GM12878 (cell line): ENCODE measurements at regions of chr16 and their contacts with region 1.

Region 1: DNA sequence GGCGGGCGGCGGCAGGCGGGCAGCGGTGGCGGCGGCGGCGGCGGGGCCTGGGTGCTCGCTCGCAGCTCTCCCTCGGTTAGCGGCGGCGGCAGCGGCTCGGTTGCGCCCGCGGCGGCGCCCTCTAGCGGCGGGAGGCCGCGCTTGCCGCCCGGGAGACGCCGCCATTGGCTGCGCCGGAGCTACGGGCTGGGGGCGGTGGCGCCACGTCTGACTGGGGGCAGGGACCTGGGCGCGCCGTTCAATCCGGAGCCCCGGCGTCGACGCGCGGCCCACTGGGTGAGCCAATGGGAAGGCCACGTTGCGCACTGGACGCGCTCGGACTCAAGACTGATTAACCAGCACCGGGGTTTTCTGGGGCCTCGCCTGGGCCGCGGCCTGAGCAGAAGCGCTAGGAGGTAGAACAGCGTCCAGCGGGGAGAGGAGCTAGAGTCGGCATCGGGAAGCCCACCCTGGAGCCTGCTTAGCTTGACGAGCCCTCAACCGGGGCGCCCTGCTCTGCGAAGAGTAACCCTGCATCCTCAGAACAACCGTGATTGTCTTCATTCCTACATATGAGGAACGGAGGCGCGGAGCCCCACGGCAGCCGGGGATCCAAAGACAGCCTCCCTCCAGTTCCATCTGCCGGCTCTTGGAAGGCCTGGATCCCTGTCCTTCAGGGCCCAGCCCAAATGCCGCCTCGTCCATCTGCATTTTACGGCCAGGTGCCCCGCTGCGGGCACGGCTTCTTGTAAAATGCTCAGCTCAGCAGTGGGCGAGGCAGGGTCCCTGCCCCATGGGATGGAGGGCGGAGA is at the start of gene ZC3H7A:
- DNase-seq: peak; percentile 82
- ATAC-seq: peak; percentile 93
- H3K4me3 ChIP-seq: peak within 1 kb of the TSS; percentile 99
- H3K27ac ChIP-seq: peak within 1 kb of the TSS; percentile 95
- H3K4me1 ChIP-seq: peaks cover 25% of the 10 kb centered on the region
- H3K27me3 ChIP-seq: no peaks in the 10 kb centered on the region
- CTCF ChIP-seq: peak; percentile 44 to 78 (median 50); a peak in 5 of 6 replicates
- EP300 ChIP-seq: no peak
- POLR2A ChIP-seq: peak; percentile 97
- RAD21 ChIP-seq: no peak
- polyA plus RNA-seq, gene ZC3H7A: 46.3 to 77.8 TPM

Region 2: GRCh38 chr16:11506741-11507305 is 290.5 kb before region 1 on chr16:
- CTCF ChIA-PET with region 1: no interaction called
- POLR2A ChIA-PET with region 1: no interaction called
- RAD21 ChIA-PET with region 1: no interaction called
- SMC1A ChIA-PET with region 1: no interaction called
- in situ Hi-C with region 1: no loop called
- intact Hi-C with region 1: no loop called
- DNase-seq: no peak
- ATAC-seq: peak; percentile 74
- H3K4me3 ChIP-seq: no peak overlapping the region
- H3K27ac ChIP-seq: no peak overlapping the region
- H3K4me1 ChIP-seq: peaks cover 6% of the 10 kb centered on the region; the same call in 1 of the 2 replicates
- H3K27me3 ChIP-seq: no peaks in the 10 kb centered on the region; a peak in 1 of 4 replicates
- CTCF ChIP-seq: peak; percentile 18 to 22 (median 20); a peak in 4 of 6 replicates
- EP300 ChIP-seq: no peak
- POLR2A ChIP-seq: no peak
- RAD21 ChIP-seq: no peak

Region 3: GRCh38 chr16:11586856-11587642 is 210.3 kb before region 1 on chr16 and contains the start of gene LITAF:
- CTCF ChIA-PET with region 1: interaction called, 4 read pairs
- POLR2A ChIA-PET with region 1: interaction called, 10 read pairs
- RAD21 ChIA-PET with region 1: interaction called, 15 read pairs
- SMC1A ChIA-PET with region 1: interaction called, 4 read pairs
- in situ Hi-C with region 1: no loop called
- intact Hi-C with region 1: no loop called
- DNase-seq: no peak
- ATAC-seq: peak; percentile 78
- H3K4me3 ChIP-seq: peak within 1 kb of the TSS; percentile 97
- H3K27ac ChIP-seq: peak within 1 kb of the TSS; percentile 92
- H3K4me1 ChIP-seq: peaks cover 10% of the 10 kb centered on the region; the same call in 1 of the 2 replicates
- H3K27me3 ChIP-seq: no peaks in the 10 kb centered on the region
- CTCF ChIP-seq: peak in 1 of 3 experiments; percentile 19; a peak in 1 of 6 replicates
- EP300 ChIP-seq: no peak
- POLR2A ChIP-seq: peak; percentile 81
- RAD21 ChIP-seq: peak; percentile 33; the same call in 1 of the 2 replicates
- polyA plus RNA-seq, gene LITAF: 144 to 195 TPM

Region 4: DNA sequence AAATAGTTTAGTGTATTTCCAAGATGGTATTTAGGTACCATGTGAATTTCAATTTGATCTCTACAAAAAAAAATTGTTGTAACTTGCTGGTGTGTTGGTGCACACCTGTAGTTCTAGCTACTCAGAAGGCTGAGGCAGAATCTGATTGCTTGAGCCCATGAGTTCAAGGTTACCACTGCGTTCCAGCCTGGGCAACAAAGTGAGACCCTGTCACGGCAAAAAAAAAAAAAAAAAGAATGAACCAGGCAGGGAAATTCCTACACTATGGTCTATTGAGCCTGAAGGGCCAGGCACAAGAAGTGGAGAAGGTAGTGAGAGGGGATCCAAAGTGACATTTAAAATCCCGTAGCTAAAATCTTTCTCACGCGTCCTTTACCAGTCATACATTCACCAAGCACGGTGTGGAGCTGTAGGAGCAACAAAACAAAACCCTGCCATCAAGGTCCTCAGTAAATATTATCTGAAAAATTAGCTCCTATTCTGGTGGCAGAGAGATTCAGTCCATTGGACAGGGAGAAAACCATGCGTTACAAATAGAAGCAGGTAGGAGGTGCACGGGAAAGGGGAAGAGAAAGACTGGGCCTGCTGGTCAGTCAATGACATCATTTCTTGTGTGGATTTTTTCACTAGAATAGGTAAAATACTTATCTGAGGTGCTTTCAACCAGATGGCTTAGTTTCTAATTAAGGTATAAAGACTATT is 82.0 kb before region 1 on chr16:
- CTCF ChIA-PET with region 1: interaction called, 18 read pairs
- POLR2A ChIA-PET with region 1: interaction called, 8 read pairs
- RAD21 ChIA-PET with region 1: interaction called, 10 read pairs
- SMC1A ChIA-PET with region 1: interaction called, 7 read pairs
- in situ Hi-C with region 1: no loop called
- intact Hi-C with region 1: no loop called
- DNase-seq: no peak
- ATAC-seq: peak; percentile 80
- H3K4me3 ChIP-seq: no peak overlapping the region
- H3K27ac ChIP-seq: peak overlapping the region; percentile 48; the same call in 1 of the 2 replicates
- H3K4me1 ChIP-seq: peaks cover 16% of the 10 kb centered on the region
- H3K27me3 ChIP-seq: no peaks in the 10 kb centered on the region
- CTCF ChIP-seq: 0 out of 6 replicates have a peak, but pooled peaks of 1 of the 3 experiments have one; percentile 3
- EP300 ChIP-seq: no peak
- POLR2A ChIP-seq: no peak
- RAD21 ChIP-seq: peak; percentile 36

Region 5: GRCh38 chr16:11742539-11743307 is 54.6 kb before region 1 on chr16 and contains the start of gene TXNDC11:
- CTCF ChIA-PET with region 1: interaction called, 42 read pairs
- POLR2A ChIA-PET with region 1: interaction called, 164 read pairs
- RAD21 ChIA-PET with region 1: interaction called, 53 read pairs
- SMC1A ChIA-PET with region 1: interaction called, 124 read pairs
- in situ Hi-C with region 1: no loop called
- intact Hi-C with region 1: loop called (anchors 2 kb)
- DNase-seq: peak; percentile 93
- ATAC-seq: peak; percentile 88
- H3K4me3 ChIP-seq: peak within 1 kb of the TSS; percentile 83
- H3K27ac ChIP-seq: peak within 1 kb of the TSS; percentile 75
- H3K4me1 ChIP-seq: peaks cover 13% of the 10 kb centered on the region
- H3K27me3 ChIP-seq: no peaks in the 10 kb centered on the region
- CTCF ChIP-seq: no peak
- EP300 ChIP-seq: peak; percentile 18 to 38; a peak in 1 of 4 replicates
- POLR2A ChIP-seq: peak; percentile 98
- RAD21 ChIP-seq: no peak
- polyA plus RNA-seq, gene TXNDC11: 1.7 to 7.3 TPM

Region 6: DNA sequence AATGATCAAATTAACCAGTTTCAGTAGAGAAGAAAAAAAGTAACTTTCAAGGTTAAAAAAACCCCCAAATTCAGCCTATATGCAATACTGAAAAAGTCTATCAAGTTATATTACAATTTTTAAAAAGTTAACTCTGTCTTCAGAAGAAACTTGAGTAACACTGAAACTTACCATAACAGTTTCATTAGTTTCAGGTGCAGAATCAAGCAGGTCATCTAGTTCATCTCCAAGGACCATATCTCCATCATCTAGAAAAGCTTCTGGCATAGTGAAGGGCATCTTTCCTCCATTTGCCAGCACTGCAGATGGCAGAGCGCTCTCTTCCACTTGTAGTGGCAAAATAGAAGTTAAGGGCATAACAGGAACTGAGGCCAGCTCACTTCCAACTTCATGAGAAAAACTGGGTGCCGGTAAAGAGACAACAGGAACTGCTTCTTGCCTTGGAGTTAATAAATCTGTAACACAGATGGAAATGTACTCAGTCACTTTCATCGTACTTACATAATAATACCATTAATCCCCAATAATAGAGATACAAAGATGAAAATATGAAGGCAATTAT is 23.2 kb before region 1 on chr16:
- CTCF ChIA-PET with region 1: interaction called, 34 read pairs
- POLR2A ChIA-PET with region 1: interaction called, 410 read pairs
- RAD21 ChIA-PET with region 1: interaction called, 33 read pairs
- SMC1A ChIA-PET with region 1: interaction called, 184 read pairs
- in situ Hi-C with region 1: no loop called
- intact Hi-C with region 1: no loop called
- DNase-seq: no peak
- ATAC-seq: peak; percentile 80
- H3K4me3 ChIP-seq: peak overlapping the region; percentile 48; the same call in 1 of the 2 replicates
- H3K27ac ChIP-seq: peak overlapping the region; percentile 48
- H3K4me1 ChIP-seq: peaks cover 54% of the 10 kb centered on the region
- H3K27me3 ChIP-seq: no peaks in the 10 kb centered on the region
- CTCF ChIP-seq: no peak
- EP300 ChIP-seq: no peak
- POLR2A ChIP-seq: no peak
- RAD21 ChIP-seq: no peak

Region 7: GRCh38 chr16:12330946-12331345 is 533.6 kb after region 1 on chr16:
- CTCF ChIA-PET with region 1: no interaction called
- POLR2A ChIA-PET with region 1: no interaction called
- RAD21 ChIA-PET with region 1: no interaction called
- SMC1A ChIA-PET with region 1: no interaction called
- in situ Hi-C with region 1: no loop called
- intact Hi-C with region 1: no loop called
- DNase-seq: no peak
- ATAC-seq: no peak
- H3K4me3 ChIP-seq: no peak overlapping the region
- H3K27ac ChIP-seq: no peak overlapping the region
- H3K4me1 ChIP-seq: peaks cover 24% of the 10 kb centered on the region
- H3K27me3 ChIP-seq: no peaks in the 10 kb centered on the region
- CTCF ChIP-seq: no peak
- EP300 ChIP-seq: no peak
- POLR2A ChIP-seq: no peak
- RAD21 ChIP-seq: no peak